IMR-90 (cell line): ENCODE measurements at regions of chr5 and their contacts with region 1.

Region 1: GRCh38 chr5:146188358-146188757 is 5.9 kb upstream of the LARS1 start:
- DNase-seq: peak; percentile 84
- ATAC-seq: peak; percentile 81
- H3K4me3 ChIP-seq: no peak overlapping the region
- H3K27ac ChIP-seq: no peak overlapping the region
- H3K4me1 ChIP-seq: no peaks in the 10 kb centered on the region; the same call in 1 of the 2 replicates
- H3K27me3 ChIP-seq: no peaks in the 10 kb centered on the region
- CTCF ChIP-seq: no peak
- POLR2A ChIP-seq: no peak
- RAD21 ChIP-seq: no peak

Region 2: GRCh38 chr5:146203011-146203871 is 14.9 kb after region 1 on chr5 and contains the start of gene RBM27:
- CTCF ChIA-PET with region 1: no interaction called
- POLR2A ChIA-PET with region 1: interaction called, 3 read pairs
- dilution Hi-C with region 1: no loop called
- in situ Hi-C with region 1: no loop called
- intact Hi-C with region 1: loop called (anchors 2 kb)
- DNase-seq: peak; percentile 99
- ATAC-seq: peak; percentile 100
- H3K4me3 ChIP-seq: peak within 1 kb of the TSS; percentile 84
- H3K27ac ChIP-seq: peak within 1 kb of the TSS; percentile 91
- H3K4me1 ChIP-seq: no peaks in the 10 kb centered on the region
- H3K27me3 ChIP-seq: no peaks in the 10 kb centered on the region
- CTCF ChIP-seq: no peak
- POLR2A ChIP-seq: peak; percentile 83
- RAD21 ChIP-seq: no peak
- total RNA-seq, gene RBM27: 19.2 and 25.3 TPM in 2 replicates

Region 3: DNA sequence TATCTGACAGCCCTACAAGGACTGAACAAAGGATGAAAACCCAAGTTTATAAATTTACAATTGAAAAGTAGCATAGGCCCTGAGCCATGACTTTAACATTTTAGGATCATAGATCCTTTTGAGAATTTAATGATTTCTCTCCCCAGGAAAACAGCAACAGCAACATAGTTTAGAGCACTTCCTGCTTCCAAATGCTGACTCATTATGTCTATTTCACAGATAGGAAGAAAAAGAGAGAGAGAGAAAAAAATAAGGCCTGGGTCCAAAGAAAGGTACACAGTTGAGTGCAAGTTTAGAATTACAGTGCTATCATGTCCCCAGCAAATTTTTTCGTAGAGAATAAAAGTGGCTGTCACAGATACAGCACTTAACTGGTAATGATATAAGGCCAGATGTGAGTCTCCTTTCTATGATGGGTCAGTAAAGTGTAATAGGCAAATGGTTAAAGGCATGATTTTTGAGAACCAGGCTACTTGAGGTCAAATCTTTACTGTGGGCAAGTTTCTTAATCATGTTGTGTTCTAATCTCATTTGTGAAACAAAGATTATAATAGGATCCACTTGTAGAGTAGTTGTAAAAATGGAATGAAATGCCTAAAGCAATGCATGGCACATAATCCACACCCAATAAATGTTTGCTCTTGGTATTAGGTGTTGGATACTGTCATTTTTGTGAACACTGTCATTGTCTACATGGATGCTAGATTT is 702.5 kb after region 1 on chr5:
- CTCF ChIA-PET with region 1: no interaction called
- POLR2A ChIA-PET with region 1: no interaction called
- dilution Hi-C with region 1: no loop called
- in situ Hi-C with region 1: no loop called
- intact Hi-C with region 1: no loop called
- DNase-seq: no peak
- ATAC-seq: no peak
- H3K4me3 ChIP-seq: no peak overlapping the region
- H3K27ac ChIP-seq: no peak overlapping the region
- H3K4me1 ChIP-seq: no peaks in the 10 kb centered on the region
- H3K27me3 ChIP-seq: no peaks in the 10 kb centered on the region
- CTCF ChIP-seq: no peak
- POLR2A ChIP-seq: no peak
- RAD21 ChIP-seq: no peak